ENCODE measurements at regions of chr19 and their contacts with region 1.

Region 1: DNA sequence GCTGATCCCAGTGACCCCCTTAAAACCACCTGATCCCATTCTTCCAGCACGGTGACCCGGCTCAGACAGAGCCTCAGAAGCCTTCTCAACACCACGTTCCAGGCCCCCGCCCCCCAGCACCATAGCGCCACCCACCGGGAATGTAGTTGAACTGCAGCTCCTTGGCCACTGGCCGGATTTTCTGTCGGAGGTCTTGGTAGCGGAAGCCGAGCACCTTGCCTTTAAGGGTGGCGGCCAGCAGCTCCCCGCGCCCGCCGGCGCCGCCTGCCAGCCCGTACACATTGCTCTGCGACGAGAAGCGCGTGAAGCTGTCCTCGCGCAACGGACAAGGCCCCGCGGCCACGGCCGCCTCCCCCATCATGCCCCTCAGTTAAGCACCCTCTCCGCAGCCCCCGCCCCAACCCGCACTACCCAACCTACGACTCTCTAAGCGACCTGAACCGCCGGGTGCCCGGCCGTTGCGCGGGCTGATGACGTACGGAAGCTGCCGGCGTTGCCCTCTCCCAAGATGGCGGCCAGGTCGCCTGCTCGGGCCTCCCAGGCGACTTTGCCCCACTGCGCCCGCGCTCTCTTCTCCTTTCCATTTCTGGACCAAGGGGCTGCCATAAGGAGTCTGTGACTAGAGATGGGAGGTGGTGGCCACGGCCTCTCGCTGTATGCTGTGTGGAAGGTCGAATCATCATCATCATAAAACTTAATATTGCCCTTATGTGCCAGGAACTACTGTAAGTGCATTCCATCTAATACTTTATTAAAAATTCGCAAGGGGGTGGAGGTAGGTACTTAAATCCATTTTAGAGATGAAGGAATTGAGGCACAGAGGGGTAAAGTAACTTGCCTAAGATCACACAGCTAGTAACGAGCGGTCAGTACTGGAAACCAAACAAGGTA is at the start of gene KPTN:
- DNase-seq: peak; percentile 89
- H3K4me3 Mint-ChIP-seq: peak within 1 kb of the TSS; percentile 98
- H3K27ac Mint-ChIP-seq: peak within 1 kb of the TSS; percentile 97
- H3K4me1 Mint-ChIP-seq: peaks cover 46% of the 10 kb centered on the region
- H3K27me3 Mint-ChIP-seq: no peaks in the 10 kb centered on the region
- total RNA-seq, gene KPTN: 12.5 to 14.1 TPM

Region 2: GRCh38 chr19:47436712-47437401 is 47.2 kb before region 1 on chr19:
- CTCF ChIA-PET with region 1: interaction called, 17 read pairs
- POLR2A ChIA-PET with region 1: no interaction called
- DNase-seq: peak; percentile 88
- H3K4me3 Mint-ChIP-seq: no peak overlapping the region
- H3K27ac Mint-ChIP-seq: peak overlapping the region; percentile 36
- H3K4me1 Mint-ChIP-seq: peaks cover 48% of the 10 kb centered on the region
- H3K27me3 Mint-ChIP-seq: peaks cover 15% of the 10 kb centered on the region

Region 3: GRCh38 chr19:47467914-47468313 is 16.1 kb before region 1 on chr19:
- CTCF ChIA-PET with region 1: interaction called, 10 read pairs
- POLR2A ChIA-PET with region 1: no interaction called
- DNase-seq: no peak
- H3K4me3 Mint-ChIP-seq: no peak overlapping the region
- H3K27ac Mint-ChIP-seq: no peak overlapping the region
- H3K4me1 Mint-ChIP-seq: peaks cover 12% of the 10 kb centered on the region
- H3K27me3 Mint-ChIP-seq: peaks cover 45% of the 10 kb centered on the region

Region 4: GRCh38 chr19:47494729-47495128 is 10.7 kb after region 1 on chr19:
- CTCF ChIA-PET with region 1: interaction called, 24 read pairs
- POLR2A ChIA-PET with region 1: no interaction called
- DNase-seq: no peak
- H3K4me3 Mint-ChIP-seq: no peak overlapping the region
- H3K27ac Mint-ChIP-seq: no peak overlapping the region
- H3K4me1 Mint-ChIP-seq: peaks cover 6% of the 10 kb centered on the region
- H3K27me3 Mint-ChIP-seq: no peaks in the 10 kb centered on the region

Region 5: GRCh38 chr19:47514869-47515588 is 31.0 kb after region 1 on chr19 and contains the start of gene NAPA:
- CTCF ChIA-PET with region 1: interaction called, 17 read pairs
- POLR2A ChIA-PET with region 1: no interaction called
- DNase-seq: peak; percentile 100
- H3K4me3 Mint-ChIP-seq: peak within 1 kb of the TSS; percentile 90
- H3K27ac Mint-ChIP-seq: peak within 1 kb of the TSS; percentile 99
- H3K4me1 Mint-ChIP-seq: peaks cover 88% of the 10 kb centered on the region
- H3K27me3 Mint-ChIP-seq: no peaks in the 10 kb centered on the region
- total RNA-seq, gene NAPA: 121 to 133 TPM

Region 6: DNA sequence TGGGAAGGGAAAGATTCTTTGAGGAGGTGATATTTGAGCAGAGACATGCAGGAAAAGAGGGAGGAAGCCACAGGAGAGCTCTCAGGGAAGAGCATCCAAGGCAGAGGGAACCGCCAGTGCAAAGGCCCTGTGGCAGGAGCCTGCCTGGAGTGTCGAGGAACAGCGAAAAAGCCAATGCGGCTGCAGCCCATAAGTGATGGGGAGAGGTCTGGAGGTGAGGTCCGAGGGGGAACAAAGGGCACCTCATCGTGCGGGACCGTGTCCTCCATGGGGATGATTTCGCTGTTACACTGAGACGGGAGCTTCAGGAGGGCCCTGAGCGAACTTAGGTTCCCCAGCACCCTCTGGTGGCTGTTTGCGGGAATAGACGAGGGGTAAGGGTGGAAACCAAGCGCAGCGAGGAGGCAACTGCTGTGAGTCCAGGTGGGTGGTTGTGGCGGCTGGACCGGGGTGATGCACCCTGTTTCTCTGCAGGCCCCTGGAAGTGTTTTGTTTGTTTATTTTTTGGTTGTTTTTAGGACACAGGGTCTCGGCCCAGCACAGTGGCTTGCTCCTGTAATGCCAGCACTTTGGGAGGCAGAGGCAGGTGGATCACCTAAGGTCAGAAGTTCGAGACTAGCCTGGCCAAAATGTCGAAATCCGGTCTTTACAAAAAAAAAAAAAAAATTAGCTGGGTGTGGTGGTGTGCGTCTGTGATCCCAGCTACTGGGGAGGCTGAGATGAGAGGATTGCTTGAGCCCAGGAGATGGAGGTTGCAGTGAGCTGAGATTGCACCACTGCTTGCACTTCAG is 223.3 kb after region 1 on chr19:
- CTCF ChIA-PET with region 1: interaction called, 10 read pairs
- POLR2A ChIA-PET with region 1: no interaction called
- DNase-seq: peak; percentile 83
- H3K4me3 Mint-ChIP-seq: no peak overlapping the region
- H3K27ac Mint-ChIP-seq: no peak overlapping the region
- H3K4me1 Mint-ChIP-seq: no peaks in the 10 kb centered on the region
- H3K27me3 Mint-ChIP-seq: peaks cover 5% of the 10 kb centered on the region

Measured in activated CD4-positive, alpha-beta T cell treated with anti-CD3 and anti-CD28 coated beads, Interleukin-2, amount 10 ng/mL, durations not matched to agents 7 days and 5 days (primary cell).